PC-9 (cell line): ENCODE measurements at regions of chr1 and their contacts with region 1.

Region 1: GRCh38 chr1:71521655-71522264 is 440.9 kb upstream of the ZRANB2 start:
- DNase-seq: peak in 1 of 2 experiments; percentile 14
- H3K4me3 ChIP-seq: no peak overlapping the region
- H3K27ac ChIP-seq: no peak overlapping the region
- H3K4me1 ChIP-seq: no peaks in the 10 kb centered on the region
- H3K27me3 ChIP-seq: no peaks in the 10 kb centered on the region
- CTCF ChIP-seq: peak; percentile 59

Region 2: GRCh38 chr1:71080739-71081696 is 440.7 kb before region 1 on chr1 and contains the start of gene ZRANB2:
- CTCF ChIA-PET with region 1: no interaction called
- POLR2A ChIA-PET with region 1: no interaction called
- intact Hi-C with region 1: loop called (anchors 5 kb)
- DNase-seq: peak; percentile 83 to 96
- H3K4me3 ChIP-seq: peak within 1 kb of the TSS; percentile 82
- H3K27ac ChIP-seq: peak within 1 kb of the TSS; percentile 83
- H3K4me1 ChIP-seq: peaks cover 21% of the 10 kb centered on the region
- H3K27me3 ChIP-seq: no peaks in the 10 kb centered on the region
- CTCF ChIP-seq: peak; percentile 79
- total RNA-seq, gene ZRANB2: 75.8 and 79.6 TPM in 2 replicates

Region 3: GRCh38 chr1:71101839-71102376 is 419.9 kb before region 1 on chr1:
- CTCF ChIA-PET with region 1: no interaction called
- POLR2A ChIA-PET with region 1: no interaction called
- intact Hi-C with region 1: loop called (anchors 5 kb)
- DNase-seq: no peak
- H3K4me3 ChIP-seq: no peak overlapping the region
- H3K27ac ChIP-seq: no peak overlapping the region
- H3K4me1 ChIP-seq: no peaks in the 10 kb centered on the region
- H3K27me3 ChIP-seq: no peaks in the 10 kb centered on the region
- CTCF ChIP-seq: no peak

Region 4: GRCh38 chr1:71196685-71197084 is 325.1 kb before region 1 on chr1:
- CTCF ChIA-PET with region 1: no interaction called
- POLR2A ChIA-PET with region 1: no interaction called
- intact Hi-C with region 1: loop called (anchors 2 kb)
- DNase-seq: no peak
- H3K4me3 ChIP-seq: no peak overlapping the region
- H3K27ac ChIP-seq: no peak overlapping the region
- H3K4me1 ChIP-seq: no peaks in the 10 kb centered on the region
- H3K27me3 ChIP-seq: no peaks in the 10 kb centered on the region
- CTCF ChIP-seq: peak; percentile 61